Activated CD4-positive, alpha-beta memory T cell treated with anti-CD3 and anti-CD28 coated beads for 36 hours (primary cell): ENCODE measurements at regions of chr17 and their contacts with region 1.

Region 1: GRCh38 chr17:75515496-75516254 is at the start of gene CASKIN2:
- DNase-seq: peak; percentile 91
- H3K4me3 Mint-ChIP-seq: peak within 1 kb of the TSS; percentile 57
- H3K27ac Mint-ChIP-seq: no peak within 1 kb of the TSS
- H3K4me1 Mint-ChIP-seq: peaks cover 17% of the 10 kb centered on the region
- H3K27me3 Mint-ChIP-seq: peaks cover 4% of the 10 kb centered on the region
- total RNA-seq, gene CASKIN2: 4.7 to 5.3 TPM

Region 2: DNA sequence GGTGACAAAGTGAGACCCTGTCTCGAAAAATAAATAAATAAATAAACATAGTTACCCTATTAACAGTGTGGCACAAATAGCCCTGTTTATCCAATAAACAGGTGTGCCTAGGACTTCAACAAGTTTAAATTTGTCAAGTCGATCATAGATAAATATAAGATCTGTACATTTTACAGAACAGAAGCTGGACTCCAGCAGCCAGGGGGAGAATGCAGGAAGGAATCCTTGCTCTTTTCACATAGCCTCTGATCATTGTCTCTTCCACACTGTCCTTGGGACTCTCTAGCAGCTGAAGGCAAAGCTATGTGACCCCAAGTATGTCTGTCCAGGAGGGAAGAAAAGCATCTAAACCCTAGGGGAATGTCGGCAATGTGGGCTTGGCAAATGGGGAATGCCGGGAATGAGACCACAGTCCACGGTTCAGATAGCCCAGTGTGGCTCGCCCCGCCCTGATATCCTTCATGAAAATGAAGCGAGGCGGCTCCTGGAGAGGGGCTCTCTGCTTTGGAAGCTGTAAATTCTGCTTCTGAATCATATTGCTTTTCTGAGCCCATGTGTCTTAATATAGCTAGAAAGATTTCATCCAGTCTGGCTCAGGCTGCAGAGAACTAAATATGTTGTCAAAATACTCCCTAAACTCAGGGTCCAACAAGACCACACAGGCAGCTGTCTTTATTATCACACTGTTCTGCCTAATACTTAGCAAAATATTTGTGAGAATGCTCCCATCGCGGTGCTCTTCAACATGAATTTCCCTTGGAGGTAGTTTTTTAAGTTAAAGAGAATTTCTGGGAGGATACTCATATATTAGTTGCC is 85.3 kb before region 1 on chr17:
- CTCF ChIA-PET with region 1: interaction called, 6 read pairs
- POLR2A ChIA-PET with region 1: no interaction called
- intact Hi-C with region 1: loop called (anchors 1 kb)
- DNase-seq: no peak
- H3K4me3 Mint-ChIP-seq: no peak overlapping the region
- H3K27ac Mint-ChIP-seq: no peak overlapping the region
- H3K4me1 Mint-ChIP-seq: peaks cover 18% of the 10 kb centered on the region
- H3K27me3 Mint-ChIP-seq: no peaks in the 10 kb centered on the region

Region 3: DNA sequence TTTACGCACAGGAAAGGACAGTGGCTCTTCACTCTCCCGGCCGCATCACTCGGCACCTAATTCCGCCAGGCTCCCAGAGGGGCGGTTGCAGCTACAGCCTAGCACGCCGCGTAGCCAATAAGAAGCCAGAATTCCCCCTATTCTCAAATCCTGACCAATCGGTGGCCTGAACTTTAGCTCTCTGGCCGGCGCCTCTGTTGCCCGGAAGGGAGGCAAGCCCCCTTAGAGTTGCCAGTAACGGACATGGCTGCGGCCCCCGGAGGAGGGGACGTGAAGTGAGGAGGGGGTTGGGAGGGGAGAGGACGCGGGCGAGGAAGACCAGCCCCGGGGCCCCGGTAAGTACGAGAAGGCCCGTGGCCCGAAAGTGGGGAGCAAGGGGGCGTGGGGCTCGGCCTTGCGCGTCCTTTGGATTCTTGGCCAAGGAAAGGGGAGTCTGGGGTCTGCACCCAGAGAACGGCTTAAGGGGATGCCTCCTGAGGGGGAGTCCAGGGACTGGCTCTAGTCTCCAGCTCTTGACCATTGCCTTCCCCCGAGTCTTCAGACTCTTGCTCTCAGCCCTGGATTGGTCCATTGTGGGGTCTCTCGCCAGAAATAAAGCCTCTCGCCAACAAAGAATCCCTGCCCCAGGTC is 59.1 kb before region 1 on chr17 and contains the start of gene TMEM94:
- CTCF ChIA-PET with region 1: interaction called, 11 read pairs
- POLR2A ChIA-PET with region 1: no interaction called
- intact Hi-C with region 1: no loop called
- DNase-seq: peak; percentile 95
- H3K4me3 Mint-ChIP-seq: peak within 1 kb of the TSS; percentile 88
- H3K27ac Mint-ChIP-seq: peak within 1 kb of the TSS; percentile 62
- H3K4me1 Mint-ChIP-seq: peaks cover 23% of the 10 kb centered on the region
- H3K27me3 Mint-ChIP-seq: no peaks in the 10 kb centered on the region
- total RNA-seq, gene TMEM94: 51.4 to 53.0 TPM

Region 4: DNA sequence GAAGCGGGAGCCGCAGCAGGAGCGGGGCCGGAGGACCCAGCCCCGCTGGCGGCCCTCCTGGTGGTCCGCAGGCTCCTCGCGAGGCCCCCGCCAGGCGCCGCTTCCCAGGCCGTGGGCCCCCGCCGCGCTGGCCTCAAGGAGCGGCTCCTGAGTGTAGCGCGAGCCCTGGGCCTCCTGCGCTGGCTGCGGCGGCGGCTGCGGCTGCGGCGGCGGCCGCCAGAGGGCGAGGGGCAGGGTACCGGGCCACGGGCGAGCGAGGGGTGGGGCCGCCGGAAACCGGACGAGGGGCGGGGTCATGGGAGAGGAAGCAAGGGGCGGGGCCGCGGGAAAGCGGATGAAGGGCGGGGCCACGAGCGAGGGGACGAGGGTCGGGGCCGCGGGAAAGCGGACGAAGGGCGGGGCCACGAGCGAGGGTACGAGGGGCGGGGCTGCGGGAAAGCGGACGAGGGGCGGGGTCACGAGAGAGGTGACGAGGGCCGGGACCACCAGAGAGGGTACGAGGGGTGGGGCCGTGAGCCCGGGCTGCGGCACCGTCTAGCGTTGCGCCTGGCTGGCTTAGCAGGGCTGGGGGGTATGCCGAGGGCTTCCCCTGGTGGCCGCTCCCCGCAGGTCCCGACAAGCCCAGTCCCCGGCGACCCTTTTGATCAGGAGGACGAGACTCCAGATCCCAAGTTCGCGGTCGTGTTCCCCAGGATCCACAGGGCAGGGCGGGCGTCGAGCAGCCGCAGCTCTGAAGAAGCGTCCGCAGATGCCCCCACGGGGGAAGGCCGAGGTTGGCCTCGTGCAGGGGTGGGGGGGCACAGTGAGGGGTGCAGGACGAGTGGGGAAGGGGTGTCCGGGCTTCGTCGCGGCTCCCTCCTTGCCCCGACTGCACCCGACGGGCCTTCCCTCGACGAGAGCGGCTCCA is 73.6 kb after region 1 on chr17:
- CTCF ChIA-PET with region 1: interaction called, 7 read pairs
- POLR2A ChIA-PET with region 1: no interaction called
- intact Hi-C with region 1: loop called (anchors 1 kb)
- DNase-seq: peak; percentile 98
- H3K4me3 Mint-ChIP-seq: peak overlapping the region; percentile 69
- H3K27ac Mint-ChIP-seq: no peak overlapping the region
- H3K4me1 Mint-ChIP-seq: no peaks in the 10 kb centered on the region
- H3K27me3 Mint-ChIP-seq: no peaks in the 10 kb centered on the region